Uterus (tissue), 4 donors: ENCODE measurements at regions of chr3 and their contacts with region 1.

Region 1: GRCh38 chr3:146065573-146066006 is 95.4 kb downstream of the PLOD2 start:
- DNase-seq: peak in 1 of 2 donors; percentile 49
- H3K4me3 ChIP-seq: no peak overlapping the region
- H3K27ac ChIP-seq: no peak overlapping the region
- H3K4me1 ChIP-seq: no peaks in the 10 kb centered on the region
- H3K27me3 ChIP-seq: no peaks in the 10 kb centered on the region
- CTCF ChIP-seq: peak; percentile 52 to 85 (median 77)
- POLR2A ChIP-seq: no peak

Region 2: GRCh38 chr3:146189519-146190173 is 124.1 kb after region 1 on chr3:
- intact Hi-C with region 1: loop called (anchors 10 kb)
- DNase-seq: peak; percentile 19 to 25
- H3K4me3 ChIP-seq: no peak overlapping the region
- H3K27ac ChIP-seq: peak overlapping the region in 1 of 2 donors; percentile 31
- H3K4me1 ChIP-seq: peaks cover 0 to 8% of the 10 kb centered on the region in 2 donors
- H3K27me3 ChIP-seq: no peaks in the 10 kb centered on the region
- CTCF ChIP-seq: peak; percentile 69 to 78 (median 74)
- POLR2A ChIP-seq: no peak

Region 3: DNA sequence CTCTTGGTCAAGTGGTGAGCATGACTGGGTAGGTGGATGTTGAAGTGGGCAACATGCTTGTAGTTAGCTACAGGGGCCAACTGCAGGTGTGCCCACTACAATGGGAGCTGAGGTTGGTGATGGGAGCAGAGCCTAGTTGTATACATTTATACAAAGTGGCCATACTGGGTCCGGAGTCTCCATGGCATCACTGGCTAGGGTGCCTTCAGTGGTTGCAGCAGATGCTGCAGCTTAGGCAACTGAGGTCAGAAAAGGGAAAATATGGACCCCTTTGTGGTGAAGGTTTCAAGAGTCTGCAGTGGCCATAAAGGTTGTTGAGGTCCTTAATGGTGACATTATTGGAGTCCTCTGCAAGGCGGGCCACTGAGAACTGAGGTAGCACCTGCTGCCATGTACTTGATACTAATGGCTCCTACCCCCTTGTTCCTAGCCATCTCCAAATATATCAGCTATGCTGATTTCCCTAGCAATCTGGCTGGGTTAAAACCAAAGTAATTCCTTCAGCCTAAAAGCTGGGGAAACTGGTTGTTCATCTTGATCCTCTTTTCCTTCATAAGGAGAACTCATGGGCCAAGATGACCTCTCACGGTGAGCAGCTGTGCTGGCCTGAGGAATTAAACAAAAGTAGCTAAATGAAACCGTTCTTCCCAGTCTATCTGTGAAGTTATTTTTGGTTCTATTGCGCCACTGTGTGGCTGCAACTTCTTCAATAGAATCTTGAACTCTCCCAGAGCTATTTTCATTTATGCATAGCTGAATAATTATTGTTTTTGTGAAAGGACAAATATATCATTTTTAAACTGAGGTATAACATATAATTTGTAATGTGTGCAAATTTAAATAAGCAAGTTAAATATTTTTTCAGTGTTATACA is 261.3 kb after region 1 on chr3:
- intact Hi-C with region 1: loop called (anchors 5 kb)
- DNase-seq: peak; percentile 37 to 70
- H3K4me3 ChIP-seq: no peak overlapping the region
- H3K27ac ChIP-seq: no peak overlapping the region
- H3K4me1 ChIP-seq: no peaks in the 10 kb centered on the region
- H3K27me3 ChIP-seq: no peaks in the 10 kb centered on the region
- CTCF ChIP-seq: peak; percentile 59 to 82 (median 72)
- POLR2A ChIP-seq: no peak